HCT116 (cell line): ENCODE measurements at regions of chr1 and their contacts with region 1.

Region 1: DNA sequence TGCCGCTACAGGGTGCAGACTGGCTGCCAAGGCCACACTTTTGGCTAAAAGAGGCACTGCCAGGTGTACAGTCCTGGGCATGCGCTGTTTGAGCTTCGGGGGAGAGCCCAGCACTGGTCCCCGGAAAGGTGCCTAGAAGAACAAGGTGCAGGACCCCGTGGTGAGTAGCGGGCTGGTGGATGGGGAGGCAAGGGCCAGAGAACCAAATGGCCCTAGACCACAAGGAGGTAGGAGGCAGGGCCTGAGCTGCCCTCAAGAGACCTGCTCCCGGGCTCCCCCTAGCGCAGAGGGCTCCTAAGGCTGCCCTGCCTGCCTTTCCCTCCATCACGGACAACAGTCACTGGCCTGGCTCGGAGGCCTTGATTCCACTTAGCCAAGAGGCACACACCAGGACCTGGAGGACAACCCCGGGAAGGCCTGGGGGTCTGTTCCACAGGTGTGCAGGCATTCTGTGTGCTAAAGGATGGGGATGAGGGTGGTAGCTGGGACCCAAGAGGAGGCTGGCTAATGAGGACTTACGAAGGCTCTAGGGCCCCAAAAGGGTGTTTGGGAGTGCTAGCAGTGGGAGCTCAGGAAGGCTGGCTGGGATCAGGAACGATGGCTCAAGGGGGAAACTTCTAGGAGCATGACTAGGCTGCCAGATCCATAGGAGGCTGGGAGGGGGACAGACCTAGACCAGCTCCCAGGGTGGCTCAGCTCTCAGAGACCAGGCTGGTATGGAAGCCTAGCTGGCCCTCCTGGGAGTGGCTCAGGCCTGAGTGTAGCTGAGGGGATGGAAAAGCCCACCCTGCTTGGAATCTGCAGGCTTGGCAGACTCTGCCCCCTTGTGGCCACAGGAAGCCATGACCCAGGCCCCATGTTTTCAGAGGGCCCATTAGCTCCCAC is 742 bp downstream of the ARTN start:
- DNase-seq: peak; percentile 68
- ATAC-seq: peak; percentile 74
- H3K4me3 ChIP-seq: peak overlapping the region; percentile 75 to 77
- H3K27ac ChIP-seq: peak overlapping the region; percentile 71
- H3K4me1 ChIP-seq: peaks cover 31 to 63% of the 10 kb centered on the region in 2 experiments
- H3K27me3 ChIP-seq: no peaks in the 10 kb centered on the region
- CTCF ChIP-seq: peak in 2 of 3 experiments; percentile 91 to 96; a peak in 4 of 6 replicates
- POLR2A ChIP-seq: peak; percentile 12
- RAD21 ChIP-seq: no peak

Region 2: DNA sequence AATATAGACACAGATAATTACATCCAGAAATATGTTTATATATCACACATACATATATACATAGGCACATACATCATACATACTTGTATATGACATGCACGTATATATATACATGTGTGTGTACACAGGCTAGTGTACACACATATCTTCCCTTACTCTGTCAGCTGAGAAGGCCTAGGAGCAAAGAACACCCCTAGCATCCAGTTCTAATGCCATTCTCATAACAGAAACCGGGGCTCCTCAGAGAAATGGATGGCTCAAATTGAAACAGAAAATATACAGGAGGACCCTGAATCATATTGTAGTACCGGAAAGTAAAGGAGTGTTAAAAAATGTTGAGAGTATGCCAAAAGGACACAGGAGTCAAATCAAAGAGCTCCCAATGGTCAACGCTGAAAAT is 460.9 kb before region 1 on chr1:
- CTCF ChIA-PET with region 1: no interaction called
- POLR2A ChIA-PET with region 1: no interaction called
- RAD21 ChIA-PET with region 1: no interaction called
- intact Hi-C with region 1: no loop called
- DNase-seq: no peak
- ATAC-seq: no peak
- H3K4me3 ChIP-seq: no peak overlapping the region
- H3K27ac ChIP-seq: peak overlapping the region; percentile 80; the same call in 1 of the 2 replicates
- H3K4me1 ChIP-seq: peaks cover 28 to 78% of the 10 kb centered on the region in 2 experiments
- H3K27me3 ChIP-seq: no peaks in the 10 kb centered on the region
- CTCF ChIP-seq: no peak
- POLR2A ChIP-seq: no peak
- RAD21 ChIP-seq: no peak

Region 3: GRCh38 chr1:43706598-43707495 is 227.5 kb before region 1 on chr1:
- CTCF ChIA-PET with region 1: interaction called, 7 read pairs
- POLR2A ChIA-PET with region 1: interaction called, 4 read pairs
- RAD21 ChIA-PET with region 1: no interaction called
- intact Hi-C with region 1: loop called (anchors 1 kb)
- DNase-seq: peak; percentile 67
- ATAC-seq: peak; percentile 96
- H3K4me3 ChIP-seq: peak overlapping the region; percentile 80 to 83
- H3K27ac ChIP-seq: peak overlapping the region; percentile 69
- H3K4me1 ChIP-seq: peaks cover 6 to 37% of the 10 kb centered on the region in 2 experiments; a peak in 3 of 4 replicates
- H3K27me3 ChIP-seq: no peaks in the 10 kb centered on the region
- CTCF ChIP-seq: no peak
- POLR2A ChIP-seq: peak; percentile 78
- RAD21 ChIP-seq: no peak

Region 4: GRCh38 chr1:43774359-43774758 is 160.0 kb before region 1 on chr1:
- CTCF ChIA-PET with region 1: interaction called, 479 read pairs
- POLR2A ChIA-PET with region 1: interaction called, 5 read pairs
- RAD21 ChIA-PET with region 1: interaction called, 3 to 6 read pairs
- intact Hi-C with region 1: no loop called
- DNase-seq: no peak
- ATAC-seq: peak; percentile 70
- H3K4me3 ChIP-seq: no peak overlapping the region
- H3K27ac ChIP-seq: no peak overlapping the region
- H3K4me1 ChIP-seq: peaks cover 11 to 28% of the 10 kb centered on the region in 2 experiments; a peak in 3 of 4 replicates
- H3K27me3 ChIP-seq: no peaks in the 10 kb centered on the region
- CTCF ChIP-seq: no peak
- POLR2A ChIP-seq: no peak
- RAD21 ChIP-seq: no peak

Region 5: DNA sequence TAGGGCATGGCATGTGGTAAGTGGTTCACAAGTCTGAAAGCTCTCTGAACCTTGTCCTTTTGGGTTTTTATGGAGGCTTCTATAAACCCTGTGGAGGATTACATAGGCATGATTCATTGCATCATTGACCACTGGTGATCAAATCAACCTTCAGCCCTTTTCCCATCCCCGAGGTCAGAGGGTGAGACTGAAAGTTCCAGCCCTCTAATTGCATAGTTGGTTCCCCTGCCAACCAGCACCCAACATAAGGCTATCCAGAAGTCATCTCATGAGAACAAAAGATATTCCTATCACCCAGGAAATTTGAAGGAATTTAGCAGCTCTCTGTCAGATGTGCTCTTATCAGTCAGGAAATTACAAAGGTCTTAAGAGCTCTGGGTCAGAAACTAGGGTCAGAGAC is 90.2 kb before region 1 on chr1:
- CTCF ChIA-PET with region 1: interaction called, 22 read pairs
- POLR2A ChIA-PET with region 1: no interaction called
- RAD21 ChIA-PET with region 1: interaction called, 3 to 4 read pairs
- intact Hi-C with region 1: loop called (anchors 5 kb)
- DNase-seq: no peak
- ATAC-seq: no peak
- H3K4me3 ChIP-seq: no peak overlapping the region
- H3K27ac ChIP-seq: no peak overlapping the region
- H3K4me1 ChIP-seq: peaks cover 0 to 6% of the 10 kb centered on the region in 2 experiments; a peak in 2 of 4 replicates
- H3K27me3 ChIP-seq: no peaks in the 10 kb centered on the region
- CTCF ChIP-seq: no peak
- POLR2A ChIP-seq: no peak
- RAD21 ChIP-seq: no peak

Region 6: DNA sequence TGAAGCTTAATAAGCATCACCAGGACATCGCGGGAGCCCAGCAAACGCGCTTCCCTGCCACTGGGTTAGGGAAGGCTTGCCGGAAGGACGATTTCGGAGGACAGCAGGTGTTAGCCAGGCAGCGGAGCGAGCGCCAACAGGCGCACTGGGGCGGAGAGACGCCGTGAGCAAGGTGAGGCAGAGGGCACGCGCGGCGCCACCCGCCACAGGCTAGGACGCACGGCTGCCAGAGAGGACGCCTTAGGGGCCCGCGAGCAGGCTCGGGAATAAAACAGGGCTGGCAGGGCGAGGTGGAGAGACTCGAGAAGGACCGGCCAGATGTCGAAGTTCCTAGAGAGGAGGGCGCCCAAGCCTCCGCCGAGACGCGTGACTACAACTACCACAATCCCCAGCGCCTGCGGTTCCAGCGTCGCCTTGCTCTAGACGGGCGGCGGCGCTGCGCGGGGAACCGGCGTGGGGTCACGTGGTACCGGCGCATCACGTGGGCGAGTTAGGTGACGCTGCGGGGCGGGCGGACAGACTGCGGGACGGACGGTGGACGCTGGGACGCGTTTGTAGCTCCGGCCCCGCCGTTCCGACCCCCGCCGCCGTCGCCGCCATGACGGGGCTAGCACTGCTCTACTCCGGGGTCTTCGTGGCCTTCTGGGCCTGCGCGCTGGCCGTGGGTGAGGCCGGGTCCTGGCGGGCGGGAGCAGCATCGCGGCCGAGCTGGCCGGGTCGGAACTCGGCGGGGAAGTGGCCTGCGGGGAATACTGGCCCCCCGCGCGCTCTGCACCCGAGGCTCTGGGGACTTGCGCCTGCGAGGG is 40.3 kb after region 1 on chr1 and contains the start of gene ATP6V0B:
- CTCF ChIA-PET with region 1: interaction called, 10 read pairs
- POLR2A ChIA-PET with region 1: interaction called, 3 read pairs
- RAD21 ChIA-PET with region 1: no interaction called
- intact Hi-C with region 1: no loop called
- DNase-seq: peak; percentile 87
- ATAC-seq: peak; percentile 74
- H3K4me3 ChIP-seq: peak within 1 kb of the TSS; percentile 92 to 99
- H3K27ac ChIP-seq: peak within 1 kb of the TSS; percentile 80
- H3K4me1 ChIP-seq: peaks cover 22 to 59% of the 10 kb centered on the region in 2 experiments
- H3K27me3 ChIP-seq: no peaks in the 10 kb centered on the region
- CTCF ChIP-seq: no peak
- POLR2A ChIP-seq: peak; percentile 84
- RAD21 ChIP-seq: no peak
- total RNA-seq, gene ATP6V0B: 122 TPM